Activated T-helper 2 cell treated with anti-CD3 and anti-CD28 coated beads, Interferon-gamma antibody, Interleukin-2, Interleukin-4, amounts not matched to agents 10 μg/mL and 5 μg/mL and 100 μg/mL, durations not matched to agents 14 hours and 24 hours and 36 hours (primary cell): ENCODE measurements at regions of chr9 and their contacts with region 1.

Region 1: GRCh38 chr9:131668439-131669268 is 71.2 kb downstream of the RAPGEF1 start:
- DNase-seq: peak; percentile 68
- H3K4me3 Mint-ChIP-seq: peak overlapping the region; percentile 72
- H3K27ac Mint-ChIP-seq: peak overlapping the region; percentile 100
- H3K4me1 Mint-ChIP-seq: peaks cover 79% of the 10 kb centered on the region
- H3K27me3 Mint-ChIP-seq: no peaks in the 10 kb centered on the region

Region 2: DNA sequence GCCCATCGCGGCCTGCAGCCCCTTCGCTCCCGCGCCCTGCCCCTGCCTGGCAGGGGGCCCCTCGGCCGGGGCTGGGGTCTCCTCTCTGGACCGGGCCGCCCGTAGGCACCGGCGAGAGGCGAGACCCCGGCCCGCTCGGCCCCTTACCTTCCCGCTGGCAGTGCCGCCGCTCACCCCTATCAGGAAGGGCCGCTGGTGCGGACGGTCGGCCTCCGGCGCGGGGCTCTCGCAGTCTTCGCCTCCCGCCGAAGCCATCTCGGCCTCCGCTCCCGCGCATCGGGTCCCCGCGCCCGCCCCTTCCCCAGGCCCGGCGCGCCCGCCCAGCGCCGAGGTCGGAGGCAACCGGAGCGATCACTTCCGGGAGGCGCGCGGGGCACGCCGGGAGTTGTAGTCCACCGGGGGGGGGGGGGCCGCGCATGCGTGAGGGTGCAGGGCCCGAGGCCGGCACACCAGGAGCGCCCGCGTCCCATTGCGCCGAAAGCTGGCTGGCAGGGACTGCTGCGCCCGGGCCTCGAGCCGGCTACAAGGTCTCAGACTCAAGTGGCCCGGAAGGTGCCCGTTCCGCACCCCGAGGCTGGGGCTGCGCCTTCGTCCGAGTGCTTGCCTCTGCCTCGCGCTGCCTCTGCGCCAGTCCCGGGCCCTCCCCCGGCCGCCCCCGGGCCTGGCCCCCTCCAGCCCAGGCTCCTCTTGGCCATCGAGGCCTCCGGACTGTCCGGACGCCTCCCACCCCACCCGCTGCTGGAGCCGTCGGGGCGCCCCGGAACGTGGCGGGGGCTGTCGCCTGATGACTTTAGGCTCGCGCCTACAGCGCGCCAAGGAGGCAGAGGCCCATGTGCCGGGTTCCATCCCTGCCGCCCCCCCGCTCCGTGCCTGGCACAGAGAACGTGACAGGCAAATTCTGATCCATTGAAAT is 137.5 kb before region 1 on chr9 and contains the start of gene UCK1:
- intact Hi-C with region 1: no loop called
- DNase-seq: peak; percentile 72
- H3K4me3 Mint-ChIP-seq: peak within 1 kb of the TSS; percentile 79
- H3K27ac Mint-ChIP-seq: peak within 1 kb of the TSS; percentile 42
- H3K4me1 Mint-ChIP-seq: peaks cover 13% of the 10 kb centered on the region
- H3K27me3 Mint-ChIP-seq: no peaks in the 10 kb centered on the region
- total RNA-seq, gene UCK1: 22.4 and 24.9 TPM in 2 replicates

Region 3: DNA sequence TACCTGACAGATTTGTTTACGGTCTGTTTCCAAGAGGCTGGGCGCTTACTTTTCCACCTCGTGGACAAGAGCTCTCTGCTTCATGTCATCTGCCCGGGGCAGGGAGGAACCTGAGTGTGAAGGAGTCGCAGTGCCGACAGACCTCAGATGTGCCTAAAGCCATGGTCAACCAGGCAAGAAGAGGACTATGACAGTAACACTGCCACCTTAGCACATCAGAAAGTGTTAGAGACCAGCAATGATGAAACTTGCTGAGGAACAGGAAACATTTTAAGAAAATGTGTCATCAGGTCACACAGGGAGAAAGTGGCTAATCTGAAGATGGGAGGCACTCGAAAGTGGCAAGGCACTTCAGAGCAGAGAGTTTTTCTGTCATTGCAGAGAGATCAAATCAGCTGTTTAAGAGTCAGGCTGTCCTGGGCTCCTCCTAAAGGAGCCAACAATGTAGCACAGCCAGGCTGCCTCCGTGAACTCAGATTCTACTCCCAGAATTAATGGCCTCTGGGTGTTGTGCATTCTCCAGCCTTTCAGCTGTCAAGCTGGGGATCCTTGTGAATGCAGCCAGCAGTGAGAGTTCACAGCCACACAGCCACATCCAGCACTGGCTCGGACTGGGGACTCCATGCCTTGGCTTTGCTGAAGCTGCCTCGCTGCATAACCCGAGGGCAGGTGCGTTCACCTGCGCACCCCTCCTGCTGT is 23.4 kb before region 1 on chr9:
- intact Hi-C with region 1: loop called (anchors 1 kb)
- DNase-seq: no peak
- H3K4me3 Mint-ChIP-seq: no peak overlapping the region
- H3K27ac Mint-ChIP-seq: peak overlapping the region; percentile 86
- H3K4me1 Mint-ChIP-seq: peaks cover 52% of the 10 kb centered on the region
- H3K27me3 Mint-ChIP-seq: no peaks in the 10 kb centered on the region

Region 4: GRCh38 chr9:131650254-131650653 is 18.4 kb before region 1 on chr9:
- intact Hi-C with region 1: loop called (anchors 1 kb)
- DNase-seq: no peak
- H3K4me3 Mint-ChIP-seq: no peak overlapping the region
- H3K27ac Mint-ChIP-seq: peak overlapping the region; percentile 33
- H3K4me1 Mint-ChIP-seq: peaks cover 47% of the 10 kb centered on the region
- H3K27me3 Mint-ChIP-seq: no peaks in the 10 kb centered on the region

Region 5: DNA sequence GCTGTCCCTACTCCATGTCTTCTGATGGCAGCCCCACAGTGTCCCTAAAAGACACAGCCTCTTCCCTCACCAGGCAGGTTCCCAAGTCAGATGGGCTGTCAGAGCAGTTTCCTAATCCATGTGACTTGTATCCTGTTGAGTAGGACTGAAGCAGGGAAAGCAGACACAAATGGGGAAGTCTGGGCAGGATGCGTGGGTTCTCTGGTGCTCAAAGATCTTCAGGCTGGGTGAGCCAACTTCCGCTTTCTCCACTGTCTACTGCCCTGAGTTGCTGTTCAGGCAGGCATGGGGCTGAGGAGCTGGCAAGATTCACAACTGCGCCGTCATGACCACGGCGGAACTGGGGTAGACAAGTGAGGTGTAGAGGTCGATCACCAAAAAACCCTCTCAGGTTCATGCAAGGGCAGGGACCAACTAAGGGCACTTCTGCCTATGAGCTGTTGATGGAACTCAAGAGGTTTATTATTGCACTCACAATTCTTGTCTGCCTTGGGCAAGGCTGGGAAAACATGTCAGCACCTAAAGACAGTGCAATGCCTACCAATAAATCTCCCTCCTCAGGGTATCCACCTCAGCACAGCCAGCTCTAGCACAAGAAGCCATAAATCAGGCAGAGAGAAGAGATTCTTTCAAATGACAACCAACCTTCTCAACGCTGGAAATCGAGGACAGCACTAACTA is 12.2 kb before region 1 on chr9:
- intact Hi-C with region 1: loop called (anchors 1 kb)
- DNase-seq: peak; percentile 55
- H3K4me3 Mint-ChIP-seq: peak overlapping the region; percentile 28
- H3K27ac Mint-ChIP-seq: peak overlapping the region; percentile 89
- H3K4me1 Mint-ChIP-seq: peaks cover 61% of the 10 kb centered on the region
- H3K27me3 Mint-ChIP-seq: no peaks in the 10 kb centered on the region

Region 6: GRCh38 chr9:131692612-131693562 is 24.2 kb after region 1 on chr9:
- intact Hi-C with region 1: loop called (anchors 2 kb)
- DNase-seq: no peak
- H3K4me3 Mint-ChIP-seq: no peak overlapping the region
- H3K27ac Mint-ChIP-seq: peak overlapping the region; percentile 25
- H3K4me1 Mint-ChIP-seq: peaks cover 81% of the 10 kb centered on the region
- H3K27me3 Mint-ChIP-seq: no peaks in the 10 kb centered on the region